Naive thymus-derived CD8-positive, alpha-beta T cell (primary cell): ENCODE measurements at regions of chr19 and their contacts with region 1.

Region 1: DNA sequence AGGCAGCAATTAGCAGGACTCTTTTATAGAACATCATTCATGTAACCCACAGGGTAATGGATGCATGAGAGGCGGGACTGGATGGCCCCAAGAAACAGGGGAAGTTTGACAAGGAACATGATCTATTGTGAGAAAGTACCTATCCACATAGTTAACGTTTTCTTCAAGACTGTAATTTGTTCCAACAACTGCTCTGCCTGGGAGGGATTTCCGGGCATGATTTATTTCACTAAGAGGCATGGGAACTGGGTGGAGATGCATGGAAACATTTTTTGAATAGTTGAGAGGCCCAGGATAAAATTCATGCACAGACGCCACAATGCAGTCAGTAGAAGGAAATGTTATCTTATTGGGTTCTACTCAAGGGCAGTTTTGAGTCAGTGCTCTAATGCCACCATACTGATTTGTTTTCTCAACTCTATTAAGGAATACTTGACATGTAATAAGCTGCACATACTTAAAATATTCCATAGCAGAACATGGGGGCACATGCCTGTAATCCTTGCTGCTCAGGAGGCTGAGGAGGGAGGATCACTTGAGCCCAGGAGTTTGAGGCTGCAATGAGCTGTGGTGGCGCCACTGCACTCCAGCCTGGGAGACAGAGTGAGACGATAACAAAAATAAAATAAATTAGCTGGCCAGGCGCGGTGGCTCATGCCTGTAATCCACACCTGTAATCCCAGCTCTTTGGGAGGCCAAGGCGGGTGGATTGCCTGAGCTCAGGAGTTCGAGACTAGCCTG is 9.9 kb upstream of the ATG4D start:
- DNase-seq: no peak
- ATAC-seq: no peak
- H3K4me3 Mint-ChIP-seq: no peak overlapping the region
- H3K27ac Mint-ChIP-seq: no peak overlapping the region
- H3K4me1 Mint-ChIP-seq: peaks cover 0 to 3% (median 2%) of the 10 kb centered on the region in 4 donors
- H3K27me3 Mint-ChIP-seq: peaks cover 1 to 9% (median 6%) of the 10 kb centered on the region in 5 donors

Region 2: DNA sequence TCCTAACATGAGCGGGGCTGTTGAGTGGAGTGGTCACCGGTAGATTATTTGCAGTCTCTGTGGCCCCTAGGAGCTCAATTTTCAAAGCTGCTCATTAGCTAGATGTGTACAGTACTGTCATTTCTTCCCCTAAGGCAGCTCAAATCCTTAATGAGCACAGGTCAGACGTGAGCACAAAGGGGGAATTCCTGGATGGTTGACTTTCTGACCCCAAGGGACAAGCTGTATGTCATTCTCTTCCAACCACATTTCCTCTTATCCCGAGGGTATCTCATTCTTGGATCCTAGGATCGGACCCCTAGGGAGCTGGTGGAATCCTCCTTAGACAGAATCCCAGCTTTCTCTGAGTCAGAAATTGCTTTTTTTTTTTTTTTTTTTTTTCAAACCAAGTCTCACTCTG is 1401.4 kb before region 1 on chr19:
- POLR2A ChIA-PET with region 1: interaction called, 12 read pairs
- DNase-seq: no peak
- ATAC-seq: no peak
- H3K4me3 Mint-ChIP-seq: no peak overlapping the region
- H3K27ac Mint-ChIP-seq: no peak overlapping the region
- H3K4me1 Mint-ChIP-seq: peaks cover under 1 to 16% (median 11%) of the 10 kb centered on the region in 4 donors
- H3K27me3 Mint-ChIP-seq: peaks cover 2 to 18% (median 7%) of the 10 kb centered on the region in 5 donors